MCF 10A (cell line): ENCODE measurements at regions of chr12 and their contacts with region 1.

Region 1: GRCh38 chr12:72295101-72295500 is 22.9 kb downstream of the TRHDE start:
- DNase-seq: no peak
- H3K4me3 Mint-ChIP-seq: no peak overlapping the region
- H3K27ac Mint-ChIP-seq: no peak overlapping the region
- H3K4me1 Mint-ChIP-seq: peaks cover 19% of the 10 kb centered on the region
- H3K27me3 Mint-ChIP-seq: no peaks in the 10 kb centered on the region
- CTCF ChIP-seq: no peak

Region 2: GRCh38 chr12:72282721-72283120 is 12.4 kb before region 1 on chr12:
- CTCF ChIA-PET with region 1: interaction called, 17 read pairs
- POLR2A ChIA-PET with region 1: no interaction called
- intact Hi-C with region 1: no loop called
- DNase-seq: peak; percentile 39
- H3K4me3 Mint-ChIP-seq: no peak overlapping the region
- H3K27ac Mint-ChIP-seq: no peak overlapping the region
- H3K4me1 Mint-ChIP-seq: no peaks in the 10 kb centered on the region
- H3K27me3 Mint-ChIP-seq: no peaks in the 10 kb centered on the region
- CTCF ChIP-seq: peak; percentile 36